HepG2 (cell line): ENCODE measurements at regions of chr7 and their contacts with region 1.

Region 1: DNA sequence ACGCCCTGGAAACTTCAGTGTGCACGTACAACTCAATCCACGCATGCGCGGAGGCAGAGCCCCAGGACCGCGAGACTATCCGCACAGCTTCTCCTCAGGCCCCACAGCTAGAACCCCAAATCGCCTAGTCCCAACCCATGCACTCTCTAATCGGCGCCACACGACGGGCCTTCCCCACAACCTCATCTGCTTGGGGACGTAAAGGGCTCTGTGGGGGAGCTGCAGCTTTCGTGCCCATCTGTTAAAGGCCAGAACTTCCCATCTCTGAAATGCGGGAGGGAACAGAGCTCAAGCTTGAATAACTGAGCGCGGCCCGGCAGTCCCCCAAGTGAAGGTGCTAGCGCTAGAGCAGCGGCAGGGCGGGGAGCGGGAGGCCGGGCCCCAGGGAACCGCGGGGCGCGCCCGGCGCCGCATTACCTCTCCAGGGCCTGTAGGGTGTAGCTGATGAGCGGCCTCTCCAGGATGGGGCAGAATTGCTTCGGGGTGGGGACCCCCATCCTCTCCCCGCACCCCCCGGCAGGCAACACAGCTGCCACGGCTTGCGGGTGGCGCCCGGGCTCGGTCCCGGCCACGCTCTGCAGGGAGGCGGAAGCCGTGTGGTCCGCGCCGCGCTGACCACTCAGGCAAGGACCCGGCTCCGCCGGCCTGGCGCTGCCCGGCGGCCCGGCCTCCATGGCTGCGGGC is 547 bp downstream of the CRPPA start:
- DNase-seq: peak; percentile 77
- ATAC-seq: peak; percentile 94
- H3K4me3 ChIP-seq: peak overlapping the region; percentile 56 to 77 (median 69)
- H3K27ac ChIP-seq: peak overlapping the region; percentile 75
- H3K4me1 ChIP-seq: peaks cover 24% of the 10 kb centered on the region
- H3K27me3 ChIP-seq: no peaks in the 10 kb centered on the region
- CTCF ChIP-seq: no peak; the same call in 1 of the 2 replicates
- EP300 ChIP-seq: no peak
- POLR2A ChIP-seq: peak; percentile 67 to 75
- RAD21 ChIP-seq: peak; percentile 21; the same call in 1 of the 2 replicates

Region 2: GRCh38 chr7:16492513-16493062 is 71.8 kb after region 1 on chr7:
- CTCF ChIA-PET with region 1: no interaction called
- POLR2A ChIA-PET with region 1: no interaction called
- in situ Hi-C with region 1: no loop called
- intact Hi-C with region 1: loop called (anchors 5 kb)
- DNase-seq: peak; percentile 90
- ATAC-seq: peak; percentile 99
- H3K4me3 ChIP-seq: peak overlapping the region in 2 of 3 experiments; percentile 9 to 11; a peak in 1 of 6 replicates
- H3K27ac ChIP-seq: peak overlapping the region; percentile 66
- H3K4me1 ChIP-seq: peaks cover 43% of the 10 kb centered on the region
- H3K27me3 ChIP-seq: no peaks in the 10 kb centered on the region
- CTCF ChIP-seq: no peak
- EP300 ChIP-seq: 0 out of 4 replicates have a peak, but pooled peaks of 1 of the 2 experiments have one; percentile 44
- POLR2A ChIP-seq: no peak
- RAD21 ChIP-seq: no peak